Heart left ventricle (tissue), 16 donors: ENCODE measurements at regions of chr12 and their contacts with region 1.

Region 1: DNA sequence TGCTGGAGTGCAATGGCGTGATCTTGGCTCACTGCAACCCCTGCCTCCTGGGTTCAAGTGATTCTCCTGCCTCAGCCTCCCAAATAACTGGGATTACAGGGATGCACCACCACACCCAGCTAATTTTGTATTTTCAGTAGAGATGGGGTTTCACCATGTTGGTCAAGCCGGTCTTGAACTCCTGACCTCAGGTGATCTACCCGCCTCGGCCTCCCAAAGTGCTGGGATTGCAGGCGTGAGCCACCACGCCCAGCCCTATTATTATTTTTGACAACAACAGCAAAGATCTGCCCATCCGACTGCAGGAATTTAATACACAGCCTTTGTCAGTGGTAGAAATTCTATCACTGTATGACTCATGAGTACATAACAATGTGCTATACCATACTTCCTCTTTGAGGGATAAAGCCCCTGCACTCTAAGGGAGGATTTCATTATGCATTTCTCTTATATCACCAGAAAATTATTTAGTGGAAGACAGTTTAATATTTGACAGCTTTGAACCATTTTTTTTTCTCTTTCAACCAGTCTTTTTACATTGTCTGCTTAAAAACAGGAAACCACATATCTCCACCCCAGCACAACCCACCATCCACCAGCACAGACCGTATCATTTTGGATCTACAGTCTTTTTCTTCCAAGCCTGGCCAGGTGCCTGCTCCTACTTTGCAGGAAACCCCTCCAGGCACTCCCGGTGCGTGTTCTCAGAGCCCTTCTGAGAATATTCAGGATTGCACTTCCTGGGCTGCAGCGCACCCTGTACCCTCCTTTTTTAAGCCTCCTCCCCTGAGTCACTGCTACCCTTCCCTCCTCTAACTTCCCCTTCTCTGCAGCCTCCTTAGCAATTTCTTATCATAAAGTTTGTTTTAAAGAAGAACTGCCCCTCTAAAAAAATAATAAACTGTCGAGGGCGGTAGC is 594 bp downstream of the ARHGDIB start:
- DNase-seq: peak; percentile 46 to 72 (median 63)
- ATAC-seq: peak; percentile 51 to 83 (median 75)
- H3K4me3 ChIP-seq: peak overlapping the region; percentile 26 to 77 (median 56)
- H3K27ac ChIP-seq: peak overlapping the region; percentile 71 to 92 (median 86)
- H3K4me1 ChIP-seq: peaks cover 0 to 80% (median 33%) of the 10 kb centered on the region in 12 donors
- H3K27me3 ChIP-seq: no peaks in the 10 kb centered on the region
- CTCF ChIP-seq: no peak
- POLR2A ChIP-seq: no peak

Region 2: GRCh38 chr12:14885718-14886221 is 75.0 kb before region 1 on chr12 and contains the start of gene MGP:
- intact Hi-C with region 1: loop called in 2 of 10 experiments (anchors 5 kb)
- DNase-seq: peak in 4 of 5 donors; percentile 46 to 69 (median 58)
- ATAC-seq: peak; percentile 79 to 93 (median 88)
- H3K4me3 ChIP-seq: peak within 1 kb of the TSS; percentile 1 to 68 (median 48)
- H3K27ac ChIP-seq: peak within 1 kb of the TSS; percentile 50 to 89 (median 79)
- H3K4me1 ChIP-seq: peaks cover 0 to 43% (median 8%) of the 10 kb centered on the region in 12 donors
- H3K27me3 ChIP-seq: no peaks in the 10 kb centered on the region
- CTCF ChIP-seq: no peak
- POLR2A ChIP-seq: peak in 1 of 2 donors; percentile 52
- total RNA-seq, gene MGP: 147 to 651 (median 255) TPM

Region 3: DNA sequence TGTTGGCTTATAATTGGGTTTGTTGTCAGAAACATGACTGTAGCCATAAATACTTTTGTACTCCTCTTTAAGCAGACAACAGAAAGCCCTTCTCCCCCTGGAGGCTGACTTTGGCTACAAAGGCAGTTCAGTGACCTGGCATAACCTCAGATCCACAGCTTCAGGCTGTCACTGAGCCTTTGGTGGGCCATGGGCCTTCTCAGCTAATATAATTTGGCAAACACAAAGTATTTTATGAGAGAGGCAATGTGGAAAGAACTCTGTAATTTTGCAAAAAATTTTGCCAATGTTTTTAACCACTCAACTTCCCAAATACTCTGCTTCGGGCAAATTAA is 59.6 kb before region 1 on chr12:
- intact Hi-C with region 1: loop called in 1 of 10 experiments (anchors 5 kb)
- DNase-seq: peak in 4 of 5 donors; percentile 25 to 56 (median 40)
- ATAC-seq: peak in 2 of 4 donors; percentile 57 to 58
- H3K4me3 ChIP-seq: no peak overlapping the region
- H3K27ac ChIP-seq: peak overlapping the region in 9 of 12 donors; percentile 2 to 77 (median 40)
- H3K4me1 ChIP-seq: peaks cover 0 to 70% (median 41%) of the 10 kb centered on the region in 12 donors
- H3K27me3 ChIP-seq: no peaks in the 10 kb centered on the region
- CTCF ChIP-seq: peak in 7 of 12 donors; percentile 13 to 47 (median 35)
- POLR2A ChIP-seq: no peak